ENCODE measurements at regions of chr5 and their contacts with region 1.

Region 1: GRCh38 chr5:143395638-143396352 is 7.7 kb downstream of the NR3C1 start:
- DNase-seq: no peak
- ATAC-seq: peak; percentile 51
- H3K4me3 Mint-ChIP-seq: peak overlapping the region; percentile 75
- H3K27ac Mint-ChIP-seq: peak overlapping the region; percentile 82
- H3K4me1 Mint-ChIP-seq: peaks cover 89% of the 10 kb centered on the region
- H3K27me3 Mint-ChIP-seq: no peaks in the 10 kb centered on the region
- CTCF ChIP-seq: no peak

Region 2: DNA sequence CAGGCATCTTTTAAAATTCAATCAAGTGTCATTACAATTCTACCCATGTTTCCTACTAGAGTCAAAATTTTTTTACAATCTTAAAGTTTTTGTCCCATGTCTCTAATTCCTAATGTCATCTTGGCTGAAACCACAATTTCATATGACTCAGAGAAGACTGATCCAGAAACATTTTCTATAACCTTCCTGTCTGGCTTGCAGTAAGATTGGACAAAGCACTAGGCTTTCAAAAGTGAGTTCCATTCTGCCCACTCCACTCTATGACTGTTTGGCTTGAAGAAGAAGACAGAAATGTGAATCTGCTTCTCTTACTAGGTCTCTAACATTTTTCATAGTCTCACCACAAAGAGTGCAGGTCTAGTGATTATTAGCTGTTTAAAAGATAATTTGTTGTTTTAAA is 81.1 kb before region 1 on chr5:
- CTCF ChIA-PET with region 1: no interaction called
- POLR2A ChIA-PET with region 1: no interaction called
- intact Hi-C with region 1: no loop called
- DNase-seq: no peak
- ATAC-seq: no peak
- H3K4me3 Mint-ChIP-seq: no peak overlapping the region
- H3K27ac Mint-ChIP-seq: peak overlapping the region; percentile 68
- H3K4me1 Mint-ChIP-seq: peaks cover 68% of the 10 kb centered on the region
- H3K27me3 Mint-ChIP-seq: no peaks in the 10 kb centered on the region
- CTCF ChIP-seq: no peak

Region 3: DNA sequence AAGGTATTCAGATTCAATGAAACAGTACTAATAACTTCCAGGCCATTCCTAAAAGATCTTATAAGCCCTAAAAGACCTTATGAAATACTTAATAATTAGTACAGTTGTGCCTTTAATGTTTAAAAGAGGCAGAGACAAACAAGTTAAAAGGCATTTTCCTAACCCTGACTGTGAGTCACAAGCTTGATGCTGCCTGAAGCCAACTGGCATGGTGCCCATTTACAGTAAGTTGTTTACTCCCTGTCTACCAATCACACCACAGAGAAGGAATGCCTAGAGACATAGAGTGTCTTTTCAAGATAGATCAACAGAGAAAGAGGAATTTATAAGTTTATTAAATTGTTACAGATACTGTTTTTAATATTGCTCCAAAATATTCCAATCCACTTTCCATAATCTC is 40.1 kb before region 1 on chr5:
- CTCF ChIA-PET with region 1: no interaction called
- POLR2A ChIA-PET with region 1: interaction called, 3 read pairs
- intact Hi-C with region 1: loop called (anchors 1 kb)
- DNase-seq: no peak
- ATAC-seq: no peak
- H3K4me3 Mint-ChIP-seq: no peak overlapping the region
- H3K27ac Mint-ChIP-seq: peak overlapping the region; percentile 8
- H3K4me1 Mint-ChIP-seq: peaks cover 81% of the 10 kb centered on the region
- H3K27me3 Mint-ChIP-seq: no peaks in the 10 kb centered on the region
- CTCF ChIP-seq: no peak

Region 4: GRCh38 chr5:143379606-143380005 is 16.2 kb before region 1 on chr5:
- CTCF ChIA-PET with region 1: no interaction called
- POLR2A ChIA-PET with region 1: interaction called, 4 read pairs
- intact Hi-C with region 1: loop called (anchors 2 kb)
- DNase-seq: no peak
- ATAC-seq: no peak
- H3K4me3 Mint-ChIP-seq: no peak overlapping the region
- H3K27ac Mint-ChIP-seq: no peak overlapping the region
- H3K4me1 Mint-ChIP-seq: peaks cover 87% of the 10 kb centered on the region
- H3K27me3 Mint-ChIP-seq: no peaks in the 10 kb centered on the region
- CTCF ChIP-seq: no peak

Region 5: DNA sequence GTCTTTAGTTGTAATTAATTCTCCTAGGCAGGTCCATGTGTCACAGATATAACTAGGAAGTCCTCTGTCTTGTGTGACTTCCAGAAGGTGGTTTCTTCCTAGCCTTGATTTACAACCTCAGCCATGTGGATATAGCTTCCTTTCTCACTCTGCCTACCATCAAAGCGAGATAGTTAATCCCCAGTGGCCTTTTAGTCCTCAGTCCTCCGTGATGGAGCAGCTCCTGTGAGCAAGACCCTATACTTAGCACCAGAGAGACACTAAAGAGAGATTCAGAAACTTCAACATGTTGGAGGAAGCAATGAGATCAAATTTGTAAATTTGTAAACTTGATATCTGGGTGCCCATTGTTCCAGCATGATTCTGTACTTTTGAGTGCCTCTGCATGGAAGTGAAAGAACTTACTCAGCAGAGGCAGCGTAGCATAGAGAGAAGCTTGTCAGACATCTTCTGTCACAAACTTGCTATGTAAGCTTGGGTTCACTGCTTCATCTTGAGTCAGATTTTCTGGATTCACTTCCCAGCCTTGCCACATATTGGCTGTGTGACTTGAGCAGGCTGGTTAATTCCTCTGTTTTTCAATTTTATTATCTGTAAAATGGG is 177.9 kb after region 1 on chr5:
- CTCF ChIA-PET with region 1: no interaction called
- POLR2A ChIA-PET with region 1: no interaction called
- intact Hi-C with region 1: no loop called
- DNase-seq: no peak
- ATAC-seq: peak; percentile 85
- H3K4me3 Mint-ChIP-seq: no peak overlapping the region
- H3K27ac Mint-ChIP-seq: no peak overlapping the region
- H3K4me1 Mint-ChIP-seq: peaks cover 14% of the 10 kb centered on the region
- H3K27me3 Mint-ChIP-seq: no peaks in the 10 kb centered on the region
- CTCF ChIP-seq: no peak

Measured in activated B cell treated with CpG ODN at 0.5 μM for 24 hours (primary cell).